ENCODE measurements at regions of chr5 and their contacts with region 1.

Region 1: DNA sequence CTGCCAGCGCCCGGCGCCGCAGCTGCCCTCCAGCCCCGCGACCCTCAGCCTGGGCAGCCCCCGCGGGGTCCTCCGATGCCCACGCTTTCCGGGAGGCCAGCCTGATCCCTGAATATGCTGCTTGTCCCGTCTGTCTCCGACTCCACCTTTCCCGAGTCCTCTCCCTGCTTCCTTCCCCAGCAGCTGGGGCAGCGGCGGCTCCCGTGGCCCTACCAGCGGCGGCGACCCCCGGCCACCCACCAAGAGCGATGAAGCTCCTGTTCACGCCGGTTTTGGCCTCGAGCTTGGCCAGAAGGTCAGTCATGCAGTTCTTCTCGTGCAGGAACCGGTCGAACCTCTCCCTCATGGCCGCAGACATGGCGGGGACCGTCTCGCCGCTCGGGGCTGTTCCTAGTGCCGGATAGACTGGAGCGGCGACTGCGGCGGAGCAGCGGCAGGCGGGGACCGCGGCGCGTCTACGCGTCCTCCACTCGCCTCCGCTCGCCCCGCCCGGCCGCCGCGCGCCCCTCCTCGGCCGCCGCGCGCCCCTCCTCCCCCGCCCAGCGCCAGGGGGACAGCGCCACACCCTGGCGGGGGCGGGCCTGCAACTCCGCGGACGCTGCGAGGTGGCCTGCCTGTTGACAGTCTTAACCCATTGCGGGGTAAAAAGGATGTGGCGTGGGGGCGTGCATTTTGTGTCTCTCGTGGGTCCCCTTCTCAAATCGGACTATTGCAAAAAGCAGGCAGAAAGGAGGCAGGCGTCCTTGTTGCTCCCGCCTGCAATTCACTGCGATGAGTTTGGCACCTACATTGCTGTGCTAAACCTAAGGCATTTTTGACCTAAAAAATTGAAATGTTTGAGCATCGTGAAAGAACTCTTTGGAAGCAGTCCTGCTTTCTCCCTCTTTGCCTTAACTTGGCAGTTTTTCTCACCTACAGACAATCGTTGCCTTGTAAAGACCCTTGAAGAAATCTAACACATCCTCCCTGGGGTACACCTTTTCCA is at the start of gene REEP5:
- DNase-seq: peak; percentile 74 to 81
- ATAC-seq: peak; percentile 89 to 91
- H3K4me3 ChIP-seq: peak within 1 kb of the TSS; percentile 95
- H3K27ac ChIP-seq: peak within 1 kb of the TSS; percentile 93 to 97
- H3K4me1 ChIP-seq: peaks cover 16% of the 10 kb centered on the region
- CTCF ChIP-seq: peak; percentile 90
- EP300 ChIP-seq: no peak
- POLR2A ChIP-seq: peak; percentile 91
- RAD21 ChIP-seq: peak; percentile 55 to 81; a peak in 4 of 5 replicates
- polyA plus RNA-seq, gene REEP5: 164 and 208 TPM in 2 replicates

Region 2: GRCh38 chr5:112902561-112902960 is 19.6 kb before region 1 on chr5:
- CTCF ChIA-PET with region 1: interaction called, 10 read pairs
- POLR2A ChIA-PET with region 1: no interaction called
- DNase-seq: no peak
- ATAC-seq: no peak
- H3K4me3 ChIP-seq: no peak overlapping the region
- H3K27ac ChIP-seq: no peak overlapping the region
- H3K4me1 ChIP-seq: no peaks in the 10 kb centered on the region
- CTCF ChIP-seq: no peak
- EP300 ChIP-seq: no peak
- POLR2A ChIP-seq: no peak
- RAD21 ChIP-seq: no peak

Region 3: DNA sequence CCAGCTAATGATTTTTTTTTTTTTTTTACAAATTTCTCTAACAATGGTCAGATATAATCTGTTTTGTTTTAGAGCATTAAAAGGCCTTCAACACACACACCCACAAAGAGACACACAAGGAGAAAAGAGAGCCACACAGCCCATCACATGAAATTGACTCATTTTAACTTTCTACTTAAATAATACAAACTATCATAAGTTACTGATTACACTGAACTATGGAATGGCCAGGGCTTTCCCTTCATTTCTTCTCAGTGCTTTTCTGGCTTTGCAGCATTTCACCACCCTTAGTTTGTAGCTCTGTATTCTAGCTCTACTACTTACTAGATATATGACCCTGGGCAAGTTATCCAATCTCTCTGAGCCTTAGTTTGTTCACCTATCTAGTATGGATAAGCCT is 13.3 kb before region 1 on chr5:
- CTCF ChIA-PET with region 1: interaction called, 25 read pairs
- POLR2A ChIA-PET with region 1: no interaction called
- DNase-seq: no peak
- ATAC-seq: no peak
- H3K4me3 ChIP-seq: no peak overlapping the region
- H3K27ac ChIP-seq: no peak overlapping the region
- H3K4me1 ChIP-seq: peaks cover 8% of the 10 kb centered on the region; the same call in 2 of the 3 replicates
- CTCF ChIP-seq: no peak
- EP300 ChIP-seq: no peak
- POLR2A ChIP-seq: no peak
- RAD21 ChIP-seq: no peak

Region 4: GRCh38 chr5:112933651-112934365 is 11.7 kb after region 1 on chr5:
- CTCF ChIA-PET with region 1: interaction called, 12 read pairs
- POLR2A ChIA-PET with region 1: no interaction called
- DNase-seq: no peak
- ATAC-seq: no peak
- H3K4me3 ChIP-seq: no peak overlapping the region
- H3K27ac ChIP-seq: no peak overlapping the region
- H3K4me1 ChIP-seq: 0 out of 3 replicates have a peak, but pooled peaks cover 7% of the 10 kb centered on the region
- CTCF ChIP-seq: no peak
- EP300 ChIP-seq: no peak
- POLR2A ChIP-seq: no peak
- RAD21 ChIP-seq: no peak

Region 5: GRCh38 chr5:112958093-112959088 is 36.3 kb after region 1 on chr5:
- CTCF ChIA-PET with region 1: interaction called, 8 read pairs
- POLR2A ChIA-PET with region 1: interaction called, 11 read pairs
- DNase-seq: peak; percentile 81 to 88
- ATAC-seq: peak; percentile 92
- H3K4me3 ChIP-seq: peak overlapping the region; percentile 15; the same call in 2 of the 3 replicates
- H3K27ac ChIP-seq: peak overlapping the region; percentile 67 to 78
- H3K4me1 ChIP-seq: peaks cover 53% of the 10 kb centered on the region
- CTCF ChIP-seq: no peak
- EP300 ChIP-seq: peak; percentile 30 to 50; a peak in 2 of 5 replicates
- POLR2A ChIP-seq: no peak
- RAD21 ChIP-seq: no peak

Region 6: GRCh38 chr5:112968411-112969106 is 46.4 kb after region 1 on chr5:
- CTCF ChIA-PET with region 1: interaction called, 23 read pairs
- POLR2A ChIA-PET with region 1: interaction called, 4 read pairs
- DNase-seq: peak in 1 of 2 experiments; percentile 62
- ATAC-seq: peak; percentile 63 to 84
- H3K4me3 ChIP-seq: no peak overlapping the region
- H3K27ac ChIP-seq: peak overlapping the region; percentile 68 to 82
- H3K4me1 ChIP-seq: peaks cover 31% of the 10 kb centered on the region
- CTCF ChIP-seq: no peak
- EP300 ChIP-seq: no peak
- POLR2A ChIP-seq: no peak
- RAD21 ChIP-seq: no peak

Region 7: GRCh38 chr5:112976432-112977309 is 54.5 kb after region 1 on chr5 and contains the start of gene DCP2:
- CTCF ChIA-PET with region 1: interaction called, 6 read pairs
- POLR2A ChIA-PET with region 1: interaction called, 18 read pairs
- DNase-seq: peak; percentile 99
- ATAC-seq: peak; percentile 96 to 99
- H3K4me3 ChIP-seq: peak within 1 kb of the TSS; percentile 86
- H3K27ac ChIP-seq: peak within 1 kb of the TSS; percentile 88 to 93
- H3K4me1 ChIP-seq: peaks cover 22% of the 10 kb centered on the region
- CTCF ChIP-seq: no peak
- EP300 ChIP-seq: no peak
- POLR2A ChIP-seq: peak; percentile 69
- RAD21 ChIP-seq: no peak
- polyA plus RNA-seq, gene DCP2: 16.1 and 18.5 TPM in 2 replicates